OCI-LY7 (cell line): ENCODE measurements at regions of chr2 and their contacts with region 1.

Region 1: DNA sequence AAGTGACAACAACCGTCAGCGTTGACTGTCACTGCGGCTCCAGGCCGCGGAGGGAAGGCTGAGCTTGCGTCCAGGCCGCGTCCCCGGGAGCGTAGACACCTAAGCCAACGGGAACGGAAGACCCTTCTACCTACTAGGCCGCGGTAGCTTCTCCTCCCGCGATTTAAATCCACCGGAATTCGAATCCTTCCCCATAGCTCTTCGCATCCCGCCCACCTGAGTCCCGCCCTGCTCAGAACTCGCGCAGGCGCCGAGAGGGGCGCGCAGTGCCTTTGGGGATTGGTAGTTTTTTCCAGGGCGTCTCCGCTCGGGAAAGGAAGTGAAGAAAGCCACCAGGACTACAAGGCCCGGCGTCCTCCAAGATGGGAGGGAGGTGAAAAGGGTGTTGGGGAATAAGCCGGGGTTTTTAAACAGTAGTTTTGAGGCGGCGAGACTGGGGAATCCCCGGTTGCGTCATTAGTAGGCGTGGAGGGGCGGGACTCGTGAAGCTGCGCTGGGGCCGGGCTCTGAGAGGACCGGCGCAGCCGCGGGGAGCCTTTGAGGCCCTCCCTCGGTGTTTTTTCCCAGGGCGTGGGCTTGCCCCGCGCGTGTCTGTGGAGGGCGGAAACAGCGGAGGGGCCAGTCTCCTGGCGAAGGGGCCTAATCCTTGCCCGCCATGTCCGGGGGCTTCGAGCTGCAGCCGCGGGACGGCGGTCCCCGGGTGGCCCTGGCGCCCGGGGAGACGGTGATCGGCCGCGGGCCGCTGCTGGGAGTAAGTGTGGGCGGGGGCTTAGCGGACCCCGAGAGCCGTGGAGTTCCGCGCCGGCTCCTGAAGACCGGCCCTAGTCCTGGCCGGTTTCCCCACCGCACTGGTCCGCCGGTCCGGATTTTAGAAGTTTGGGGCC is at the starts of genes APLF and FBXO48:
- DNase-seq: peak; percentile 99
- H3K4me3 ChIP-seq: peak within 1 kb of the TSS; percentile 82
- H3K27ac ChIP-seq: peak within 1 kb of the TSS; percentile 49
- H3K4me1 ChIP-seq: peaks cover 41% of the 10 kb centered on the region
- CTCF ChIP-seq: no peak
- total RNA-seq, gene APLF: 6.1 and 8.8 TPM in 2 replicates
- total RNA-seq, gene FBXO48: 1.5 and 1.8 TPM in 2 replicates

Region 2: DNA sequence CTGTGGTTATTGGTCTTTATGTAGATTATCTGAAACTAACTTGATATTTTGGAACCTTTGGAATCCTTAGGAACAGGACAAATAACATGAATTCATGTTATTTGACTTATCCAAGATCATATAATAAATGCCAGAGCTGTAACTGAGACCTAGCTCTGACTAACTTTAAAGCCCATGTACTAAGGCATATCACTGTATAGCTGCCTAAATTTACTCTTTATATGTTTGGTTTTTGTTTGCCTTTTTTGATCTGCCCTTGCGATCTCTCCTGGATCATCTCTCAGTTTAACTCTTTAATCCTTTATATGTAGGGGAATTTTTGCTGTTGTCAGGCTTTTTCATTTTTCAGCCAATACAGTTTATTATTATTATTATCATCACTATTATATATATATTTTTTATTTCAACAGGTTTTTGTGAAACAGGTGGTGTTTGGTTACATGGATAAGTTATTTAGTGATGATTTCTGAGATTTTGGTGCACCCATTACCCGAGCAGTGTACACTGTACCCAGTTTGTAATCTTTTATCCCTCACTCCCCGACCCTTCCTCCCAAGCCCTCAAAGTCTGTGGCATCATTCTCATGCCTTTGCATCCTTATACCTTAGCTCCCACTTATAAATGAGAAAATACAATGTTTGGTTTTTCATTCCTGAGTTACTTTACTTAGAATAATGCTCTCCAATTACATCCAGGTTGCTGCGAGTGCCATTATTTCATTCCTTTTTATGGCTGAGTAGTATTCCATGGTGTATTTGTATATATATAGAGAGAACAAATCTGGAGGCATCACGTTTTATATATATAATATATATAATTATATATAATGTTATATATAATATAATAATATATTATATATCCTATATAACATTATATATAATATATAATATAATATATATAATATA is 49.0 kb after region 1 on chr2:
- CTCF ChIA-PET with region 1: no interaction called
- POLR2A ChIA-PET with region 1: no interaction called
- intact Hi-C with region 1: no loop called
- DNase-seq: no peak
- H3K4me3 ChIP-seq: no peak overlapping the region
- H3K27ac ChIP-seq: no peak overlapping the region
- H3K4me1 ChIP-seq: no peaks in the 10 kb centered on the region
- CTCF ChIP-seq: no peak

Region 3: GRCh38 chr2:68594674-68595492 is 127.6 kb after region 1 on chr2:
- CTCF ChIA-PET with region 1: interaction called, 3 read pairs
- POLR2A ChIA-PET with region 1: interaction called, 3 read pairs
- intact Hi-C with region 1: loop called (anchors 1 kb)
- DNase-seq: peak; percentile 57
- H3K4me3 ChIP-seq: no peak overlapping the region
- H3K27ac ChIP-seq: no peak overlapping the region
- H3K4me1 ChIP-seq: peaks cover 15% of the 10 kb centered on the region
- CTCF ChIP-seq: peak; percentile 98

Region 4: GRCh38 chr2:68715353-68716041 is 248.2 kb after region 1 on chr2:
- CTCF ChIA-PET with region 1: no interaction called
- POLR2A ChIA-PET with region 1: no interaction called
- intact Hi-C with region 1: loop called (anchors 5 kb)
- DNase-seq: peak; percentile 87
- H3K4me3 ChIP-seq: peak overlapping the region; percentile 51
- H3K27ac ChIP-seq: peak overlapping the region; percentile 68
- H3K4me1 ChIP-seq: peaks cover 31% of the 10 kb centered on the region
- CTCF ChIP-seq: peak; percentile 90

Region 5: DNA sequence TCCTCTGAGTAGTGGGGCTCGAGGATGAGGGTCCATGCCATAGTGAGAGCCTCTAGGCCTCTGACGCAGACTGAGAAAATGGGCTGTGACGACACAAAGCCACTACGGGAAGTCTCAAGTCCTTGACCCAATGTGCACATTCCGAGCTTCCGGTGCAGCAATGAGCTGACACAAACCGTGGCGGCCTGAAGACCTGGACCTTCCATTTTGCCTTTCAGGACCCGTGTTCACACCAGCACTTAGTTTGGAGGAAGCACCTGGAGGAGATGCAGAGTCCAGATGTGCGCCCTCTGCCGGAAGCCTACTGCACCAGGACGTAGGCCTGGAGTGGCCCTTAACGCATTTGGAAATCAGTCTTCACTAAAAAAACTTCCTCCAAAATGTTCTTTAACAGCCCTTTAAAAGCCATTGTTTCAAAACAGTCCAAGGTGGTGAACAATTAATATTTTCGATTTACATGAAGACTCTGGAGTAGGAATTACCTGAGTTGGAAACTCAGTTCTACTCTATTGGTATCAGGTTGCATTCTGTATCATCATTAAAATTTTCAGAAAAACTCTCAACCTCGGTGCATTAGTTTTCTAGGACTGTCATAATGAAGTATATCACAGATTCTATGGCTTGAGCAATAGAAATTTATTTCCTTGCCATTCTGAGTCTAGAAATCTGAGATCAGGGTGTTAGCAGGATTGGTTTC is 370.0 kb after region 1 on chr2:
- CTCF ChIA-PET with region 1: no interaction called
- POLR2A ChIA-PET with region 1: no interaction called
- intact Hi-C with region 1: loop called (anchors 5 kb)
- DNase-seq: peak; percentile 85
- H3K4me3 ChIP-seq: no peak overlapping the region
- H3K27ac ChIP-seq: no peak overlapping the region
- H3K4me1 ChIP-seq: peaks cover 50% of the 10 kb centered on the region
- CTCF ChIP-seq: peak; percentile 97